Sigmoid colon (tissue), 7 donors: ENCODE measurements at regions of chr11 and their contacts with region 1.

Region 1: DNA sequence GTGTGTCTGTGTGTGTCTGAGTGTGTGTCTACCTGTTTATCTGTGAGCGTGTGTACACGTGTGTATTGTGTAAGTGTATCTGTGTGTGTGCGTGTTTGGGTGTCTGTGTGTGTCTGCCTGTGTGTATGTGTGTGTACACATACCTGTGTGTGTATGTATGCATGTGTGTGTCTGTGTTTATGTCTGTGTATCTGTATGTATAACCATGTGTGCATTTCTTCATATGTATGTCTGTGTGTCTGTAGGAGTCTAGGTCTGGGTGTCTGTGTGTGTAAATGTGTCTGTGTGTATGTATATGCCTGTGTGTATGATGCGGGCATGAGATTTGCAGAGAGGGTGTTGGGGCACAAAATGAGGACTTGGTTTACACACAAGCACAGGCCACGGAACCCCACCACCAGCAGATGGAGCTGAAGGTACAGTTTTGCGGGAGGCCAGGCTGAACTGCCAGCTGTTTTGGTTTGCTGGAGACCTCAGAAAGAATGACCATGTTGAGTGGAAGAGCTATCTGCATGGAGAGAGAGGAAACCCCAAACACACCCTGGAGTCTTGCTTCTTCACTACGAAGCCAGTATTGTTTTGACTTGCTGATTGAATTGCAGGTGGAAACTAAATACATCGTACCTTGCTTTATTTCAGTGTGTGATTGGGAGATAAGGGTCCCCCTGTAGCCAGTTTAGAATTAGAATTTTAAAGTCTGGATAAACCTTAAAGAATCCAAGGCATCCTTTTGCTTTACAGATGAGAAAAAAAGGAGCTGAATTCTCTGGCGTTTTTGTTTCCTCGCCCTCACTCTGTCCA is 497.2 kb downstream of the NTM start:
- DNase-seq: peak; percentile 84
- H3K4me3 ChIP-seq: no peak overlapping the region
- H3K27ac ChIP-seq: no peak overlapping the region
- H3K4me1 ChIP-seq: no peaks in the 10 kb centered on the region
- H3K27me3 ChIP-seq: no peaks in the 10 kb centered on the region
- CTCF ChIP-seq: peak; percentile 53 to 71 (median 61)
- EP300 ChIP-seq: no peak
- POLR2A ChIP-seq: no peak

Region 2: DNA sequence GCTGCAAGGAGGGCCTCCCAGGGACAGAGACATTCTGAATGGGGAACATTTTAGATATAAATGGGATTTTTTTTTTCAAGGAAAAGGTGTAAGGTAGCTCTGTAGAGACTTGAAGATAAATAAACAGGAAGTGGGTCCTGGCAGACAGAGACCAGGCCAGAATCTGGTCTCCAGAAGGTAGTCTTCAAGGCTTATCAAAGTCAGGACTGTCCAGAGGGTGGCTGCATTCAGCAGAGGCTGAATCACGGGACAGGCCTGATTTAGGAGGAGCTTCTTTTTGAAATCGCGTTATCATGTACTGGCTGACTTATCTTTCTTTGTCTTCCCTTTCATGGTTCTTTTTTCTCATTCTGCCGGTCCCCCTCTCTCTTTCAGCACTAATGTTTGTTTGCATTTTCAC is 45.6 kb after region 1 on chr11:
- intact Hi-C with region 1: loop called (anchors 2 kb)
- DNase-seq: no peak
- H3K4me3 ChIP-seq: no peak overlapping the region
- H3K27ac ChIP-seq: no peak overlapping the region
- H3K4me1 ChIP-seq: peaks cover 0 to 25% (median 14%) of the 10 kb centered on the region in 4 donors
- H3K27me3 ChIP-seq: peaks cover 3 to 23% (median 10%) of the 10 kb centered on the region in 3 donors
- CTCF ChIP-seq: no peak
- EP300 ChIP-seq: no peak
- POLR2A ChIP-seq: no peak

Region 3: DNA sequence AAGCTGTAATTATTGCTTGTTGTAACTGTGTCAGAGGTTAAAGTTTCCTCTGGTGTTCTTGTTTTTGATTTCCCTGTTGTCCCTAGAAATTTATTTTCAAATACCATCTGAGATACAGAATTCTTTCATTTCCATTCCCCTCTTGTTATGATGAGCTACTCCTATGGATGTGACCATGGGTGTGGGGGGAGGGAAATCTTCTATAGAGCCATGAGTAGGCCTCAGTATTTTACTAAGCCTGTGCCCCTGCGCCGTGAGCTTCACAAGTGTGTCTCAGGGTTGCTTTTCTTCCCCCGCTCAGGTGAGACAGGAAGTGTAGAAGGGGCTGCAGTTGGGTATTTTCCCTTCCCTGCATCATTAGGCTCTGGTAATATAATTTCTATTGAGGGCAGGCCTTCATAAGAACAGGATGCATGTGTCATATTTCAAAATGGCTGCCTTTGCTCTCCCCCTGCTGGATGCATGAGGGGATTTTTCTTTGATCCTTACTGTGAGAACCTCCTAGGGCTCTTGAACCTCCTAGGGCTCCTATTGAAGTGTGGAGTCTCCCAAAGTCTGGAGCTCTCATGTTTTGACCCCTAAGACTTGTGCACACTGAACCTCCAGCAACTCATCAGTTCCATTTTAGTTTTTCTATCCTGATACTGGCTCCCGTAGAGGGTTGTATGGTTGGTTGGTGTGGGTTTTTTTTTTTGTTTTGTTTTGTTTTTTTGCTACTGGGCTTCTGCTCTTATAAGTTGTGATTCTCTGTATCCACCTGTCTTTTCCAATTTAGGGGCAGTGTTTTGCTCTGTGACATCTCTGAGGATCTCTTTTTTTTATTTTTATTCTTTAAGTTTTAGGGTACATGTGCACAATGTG is 161.0 kb after region 1 on chr11:
- intact Hi-C with region 1: loop called (anchors 1 kb)
- DNase-seq: no peak
- H3K4me3 ChIP-seq: no peak overlapping the region
- H3K27ac ChIP-seq: no peak overlapping the region
- H3K4me1 ChIP-seq: peaks cover 0 to 10% (median 0%) of the 10 kb centered on the region in 4 donors
- H3K27me3 ChIP-seq: no peaks in the 10 kb centered on the region
- CTCF ChIP-seq: peak in 3 of 4 experiments; percentile 42 to 62 (median 59)
- EP300 ChIP-seq: no peak
- POLR2A ChIP-seq: no peak

Region 4: DNA sequence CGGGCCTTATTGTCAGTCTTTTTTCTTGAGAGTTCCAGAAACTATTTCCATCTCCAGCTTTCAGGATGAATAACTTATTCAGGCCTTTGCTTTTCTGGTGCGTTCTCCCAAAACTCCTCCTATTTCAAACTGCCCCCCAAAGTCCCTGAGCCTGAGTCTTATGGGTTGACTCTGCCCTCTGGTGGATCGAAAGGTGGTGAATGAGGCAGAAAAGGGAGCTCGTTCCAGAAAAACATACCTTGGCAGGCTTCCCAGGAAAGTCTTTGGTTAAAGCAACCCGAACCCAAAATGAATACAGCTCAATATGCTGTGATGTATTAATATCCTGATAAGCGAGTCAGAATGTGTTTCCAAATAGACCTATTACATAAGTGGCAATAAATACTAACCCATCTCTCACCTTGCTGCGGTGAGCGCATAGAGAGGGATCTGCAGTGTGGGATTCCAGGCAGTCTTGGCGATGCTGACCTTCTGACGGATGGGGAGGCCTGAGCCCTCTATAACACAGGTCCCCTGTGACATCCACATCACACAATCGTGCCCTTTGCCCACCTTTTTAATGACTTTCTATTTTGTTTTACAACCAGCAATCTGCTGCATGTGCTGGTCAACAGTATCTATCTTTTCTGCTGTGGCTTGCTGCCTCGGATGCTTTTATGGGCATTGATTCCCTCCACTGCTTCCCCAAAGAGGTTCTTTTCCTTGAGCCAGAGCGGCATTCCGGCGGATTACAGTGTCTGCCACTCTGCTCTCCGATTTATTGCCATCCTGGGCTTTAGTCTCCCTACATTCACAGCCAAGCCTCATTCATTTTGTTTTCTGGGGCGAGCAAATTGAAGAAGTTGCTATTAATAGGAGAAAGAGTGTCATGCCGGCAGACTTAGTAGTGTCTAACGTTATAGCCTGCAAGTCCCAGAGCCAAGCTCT is 259.6 kb after region 1 on chr11:
- intact Hi-C with region 1: loop called (anchors 2 kb)
- DNase-seq: peak; percentile 71
- H3K4me3 ChIP-seq: peak overlapping the region; percentile 16 to 46 (median 34)
- H3K27ac ChIP-seq: peak overlapping the region; percentile 41 to 63 (median 48)
- H3K4me1 ChIP-seq: peaks cover 0 to 22% (median 20%) of the 10 kb centered on the region in 4 donors
- H3K27me3 ChIP-seq: no peaks in the 10 kb centered on the region
- CTCF ChIP-seq: peak; percentile 13 to 51 (median 39)
- EP300 ChIP-seq: no peak
- POLR2A ChIP-seq: no peak

Region 5: GRCh38 chr11:133064152-133064877 is 1196.7 kb after region 1 on chr11:
- intact Hi-C with region 1: loop called (anchors 5 kb)
- DNase-seq: peak; percentile 76
- H3K4me3 ChIP-seq: peak overlapping the region; percentile 40 to 59 (median 50)
- H3K27ac ChIP-seq: peak overlapping the region; percentile 7 to 68 (median 40)
- H3K4me1 ChIP-seq: peaks cover 0 to 7% (median 0%) of the 10 kb centered on the region in 4 donors
- H3K27me3 ChIP-seq: peaks cover 0 to 2% (median 0%) of the 10 kb centered on the region in 3 donors
- CTCF ChIP-seq: peak in 2 of 4 experiments; percentile 46
- EP300 ChIP-seq: no peak
- POLR2A ChIP-seq: no peak